Posterior vena cava (tissue), 2 donors: ENCODE measurements at regions of chr5 and their contacts with region 1.

Region 1: DNA sequence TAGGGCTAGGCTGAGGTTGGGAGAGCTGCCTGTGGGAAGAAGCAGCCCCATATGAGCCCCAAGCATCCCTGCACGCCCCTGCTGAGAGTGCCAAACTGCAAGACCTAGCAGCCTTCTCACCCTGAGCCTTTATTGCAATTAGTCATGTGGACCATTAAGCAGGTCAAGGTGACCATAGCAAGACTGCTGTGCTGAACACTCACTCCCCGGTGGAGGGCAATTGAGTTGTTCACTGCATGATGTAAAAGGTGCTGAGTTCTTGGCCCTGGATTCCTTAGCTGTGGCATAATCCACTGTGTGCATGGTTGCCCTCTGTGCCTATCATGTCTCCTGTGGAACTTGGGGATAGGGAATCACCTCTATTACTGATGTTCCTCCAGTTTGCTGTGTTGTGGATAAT is 131.1 kb downstream of the FOXD1 start:
- DNase-seq: no peak

Region 2: DNA sequence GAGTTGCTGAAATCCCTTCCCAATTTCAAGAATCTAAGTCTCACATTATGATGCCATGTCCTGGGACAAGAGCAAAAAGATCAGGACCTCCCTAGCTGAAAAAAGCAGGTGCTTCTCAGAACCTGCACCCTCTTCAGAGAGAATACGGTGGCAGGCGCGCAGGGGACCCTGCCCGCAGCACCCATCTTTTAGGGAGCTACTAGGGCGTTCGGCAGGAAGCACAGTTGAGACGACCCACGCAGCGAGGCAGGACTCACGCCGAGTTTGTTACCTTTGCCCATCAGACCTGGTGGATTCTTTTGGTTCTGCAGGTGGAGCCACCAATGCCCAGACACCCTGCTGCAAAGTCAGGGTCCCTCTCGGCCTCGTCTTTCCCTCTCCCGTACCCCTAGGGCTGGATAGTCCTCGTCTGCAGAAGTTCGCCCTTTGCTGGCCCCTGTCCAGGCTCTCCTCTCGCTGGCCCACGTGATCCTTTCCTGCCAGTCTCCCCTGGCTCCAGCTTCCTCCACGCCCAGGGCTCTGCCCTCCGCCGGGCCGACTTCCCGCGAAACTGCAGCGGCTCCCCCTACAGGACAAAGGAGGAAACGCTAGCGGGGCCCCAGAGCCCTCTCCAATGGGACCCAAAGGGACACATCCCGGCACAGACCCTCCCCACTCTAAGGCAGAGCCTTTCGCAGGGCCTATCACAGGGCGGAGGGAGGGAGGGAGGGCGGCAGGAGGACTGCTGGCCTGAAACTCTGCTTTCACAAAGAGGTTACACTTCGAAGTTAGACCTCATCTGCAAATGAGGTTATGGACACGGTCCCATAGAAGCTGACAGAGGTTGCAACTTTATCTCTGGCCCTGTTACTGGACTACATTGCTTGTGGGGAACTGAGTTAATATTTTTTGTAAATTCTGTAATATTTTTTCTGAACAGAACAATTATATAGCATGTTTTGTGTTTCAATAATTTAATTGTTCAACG is 115.7 kb before region 1 on chr5:
- intact Hi-C with region 1: no loop called
- DNase-seq: peak; percentile 91

Region 3: DNA sequence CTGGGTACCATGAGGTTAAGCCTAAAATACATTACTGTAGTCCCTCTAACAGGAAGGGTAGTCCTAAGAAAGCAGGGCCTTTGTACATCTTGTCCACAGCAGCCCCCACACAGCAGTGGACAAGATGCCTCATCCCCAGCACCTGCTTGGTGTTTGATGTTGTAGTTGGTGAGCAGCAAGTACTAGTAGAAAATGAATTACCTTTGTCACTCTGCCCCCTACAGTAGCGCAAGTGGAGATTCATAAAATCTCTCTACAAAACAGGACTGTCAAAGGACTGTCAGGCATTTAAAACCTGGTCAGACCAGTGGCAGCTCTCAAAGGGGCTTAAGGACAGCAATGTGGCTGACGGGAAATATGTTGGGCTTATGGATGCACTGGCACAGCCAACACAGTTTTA is 22.1 kb before region 1 on chr5:
- intact Hi-C with region 1: no loop called
- DNase-seq: no peak

Region 4: DNA sequence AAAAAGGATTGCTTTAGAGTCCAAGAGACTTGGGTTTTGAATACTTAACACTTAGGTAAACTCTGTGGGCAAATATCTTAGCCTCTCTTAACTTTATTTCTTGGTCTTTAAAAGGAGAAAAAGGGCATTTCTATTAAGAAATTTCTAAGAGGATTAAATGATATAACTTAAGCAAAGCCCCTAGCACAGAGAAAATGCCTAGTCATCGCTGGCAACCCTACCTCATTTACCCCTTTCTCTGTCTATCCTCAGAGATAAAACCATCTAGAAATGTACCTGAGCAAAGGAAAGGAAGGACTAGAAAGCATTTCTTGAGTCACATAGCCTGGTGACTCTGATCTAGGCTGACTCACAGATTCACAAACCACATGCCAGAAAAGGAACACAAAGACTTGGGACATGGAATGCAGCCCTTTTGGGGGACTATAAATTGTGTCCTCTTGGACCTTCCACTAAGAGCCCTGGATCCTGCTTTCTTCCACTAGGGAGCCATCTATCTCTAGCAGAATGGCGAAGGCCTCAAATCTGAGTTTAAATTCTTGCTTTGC is 10.5 kb after region 1 on chr5:
- intact Hi-C with region 1: no loop called
- DNase-seq: no peak

Region 5: GRCh38 chr5:73363911-73364730 is 46.6 kb after region 1 on chr5:
- intact Hi-C with region 1: loop called in 1 of 2 experiments (anchors 2 kb)
- DNase-seq: no peak